Activated naive CD4-positive, alpha-beta T cell treated with anti-CD3 and anti-CD28 coated beads for 36 hours (primary cell): ENCODE measurements at regions of chr17 and their contacts with region 1.

Region 1: GRCh38 chr17:62968445-62968923 is 2.4 kb downstream of the TANC2 start:
- DNase-seq: peak; percentile 66
- H3K4me3 Mint-ChIP-seq: no peak overlapping the region
- H3K27ac Mint-ChIP-seq: no peak overlapping the region
- H3K4me1 Mint-ChIP-seq: peaks cover 22% of the 10 kb centered on the region
- H3K27me3 Mint-ChIP-seq: peaks cover 11% of the 10 kb centered on the region

Region 2: DNA sequence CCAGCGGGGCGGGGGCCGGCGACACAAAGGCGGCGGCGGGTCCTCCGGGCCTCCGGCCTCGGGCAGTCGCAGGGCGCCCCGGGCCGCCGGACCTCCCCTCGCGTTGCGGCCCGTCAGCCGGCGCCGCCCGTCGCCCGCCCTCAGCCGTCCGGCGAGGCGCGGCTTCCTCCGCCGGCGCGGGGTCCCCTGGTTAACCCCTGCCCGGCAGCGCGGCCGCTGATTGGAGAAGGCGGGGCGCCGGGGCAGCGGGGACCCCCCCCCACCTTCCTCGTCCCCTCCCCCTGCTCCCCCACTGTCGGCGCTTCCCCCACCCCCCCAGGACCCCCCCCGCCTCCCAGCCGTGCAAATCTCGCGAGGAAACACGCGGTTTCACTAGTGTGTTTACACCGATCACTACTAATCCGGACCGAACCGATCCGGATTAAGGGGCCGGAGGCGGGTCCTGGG is 490.0 kb before region 1 on chr17 and contains the start of gene TLK2:
- CTCF ChIA-PET with region 1: no interaction called
- intact Hi-C with region 1: loop called (anchors 5 kb)
- DNase-seq: peak; percentile 82
- H3K4me3 Mint-ChIP-seq: peak within 1 kb of the TSS; percentile 89
- H3K27ac Mint-ChIP-seq: peak within 1 kb of the TSS; percentile 95
- H3K4me1 Mint-ChIP-seq: peaks cover 33% of the 10 kb centered on the region
- H3K27me3 Mint-ChIP-seq: no peaks in the 10 kb centered on the region
- total RNA-seq, gene TLK2: 27.1 to 29.5 TPM

Region 3: DNA sequence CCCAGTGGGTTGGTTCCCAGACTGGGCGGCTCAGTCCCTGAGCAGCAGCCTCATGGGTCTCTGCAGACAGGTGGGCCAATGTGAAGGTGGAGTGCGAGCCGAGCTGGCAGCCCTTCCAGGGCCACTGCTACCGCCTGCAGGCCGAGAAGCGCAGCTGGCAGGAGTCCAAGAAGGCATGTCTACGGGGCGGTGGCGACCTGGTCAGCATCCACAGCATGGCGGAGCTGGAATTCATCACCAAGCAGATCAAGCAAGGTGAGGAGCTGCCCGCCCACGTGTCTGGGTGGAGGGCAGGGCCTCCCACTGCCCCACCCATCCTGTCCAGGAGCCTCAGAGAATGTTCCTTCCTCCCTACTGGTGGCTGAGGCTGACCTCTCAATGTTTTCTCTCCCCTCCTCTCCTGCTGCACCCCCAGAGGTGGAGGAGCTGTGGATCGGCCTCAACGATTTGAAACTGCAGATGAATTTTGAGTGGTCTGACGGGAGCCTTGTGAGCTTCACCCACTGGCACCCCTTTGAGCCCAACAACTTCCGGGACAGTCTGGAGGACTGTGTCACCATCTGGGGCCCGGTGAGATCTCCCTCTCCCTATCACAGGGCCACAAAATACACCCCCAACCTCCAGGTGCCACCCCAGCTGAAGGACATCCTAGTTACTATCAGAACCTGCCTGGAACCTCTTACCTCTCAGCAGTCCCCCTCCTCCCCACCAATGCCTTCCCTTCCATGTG is 296.7 kb before region 1 on chr17:
- CTCF ChIA-PET with region 1: no interaction called
- intact Hi-C with region 1: loop called (anchors 1 kb)
- DNase-seq: no peak
- H3K4me3 Mint-ChIP-seq: no peak overlapping the region
- H3K27ac Mint-ChIP-seq: no peak overlapping the region
- H3K4me1 Mint-ChIP-seq: peaks cover 3% of the 10 kb centered on the region
- H3K27me3 Mint-ChIP-seq: no peaks in the 10 kb centered on the region

Region 4: GRCh38 chr17:62724398-62725146 is 243.9 kb before region 1 on chr17:
- CTCF ChIA-PET with region 1: interaction called, 3 read pairs
- intact Hi-C with region 1: loop called (anchors 1 kb)
- DNase-seq: peak; percentile 93
- H3K4me3 Mint-ChIP-seq: no peak overlapping the region
- H3K27ac Mint-ChIP-seq: peak overlapping the region; percentile 25
- H3K4me1 Mint-ChIP-seq: peaks cover 23% of the 10 kb centered on the region
- H3K27me3 Mint-ChIP-seq: peaks cover 48% of the 10 kb centered on the region

Region 5: DNA sequence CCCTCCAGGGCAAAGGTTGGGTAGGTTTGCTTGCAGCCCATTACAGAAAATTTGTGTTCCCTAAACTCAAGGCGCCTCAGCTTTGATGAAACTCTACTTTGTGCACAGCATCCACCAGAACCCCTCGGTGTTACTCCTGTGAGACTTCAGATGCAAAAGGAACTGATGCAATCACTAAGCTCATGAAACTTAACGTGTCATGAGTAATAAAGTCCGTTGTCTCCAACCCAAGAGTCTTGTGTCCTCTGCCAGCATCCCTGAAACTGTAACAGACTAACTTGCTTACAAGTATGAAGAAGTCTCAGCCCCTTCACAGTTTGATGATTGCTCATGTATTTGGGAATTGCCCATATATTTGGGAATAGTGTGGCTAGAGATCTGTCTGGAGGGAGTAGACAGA is 85.6 kb before region 1 on chr17:
- CTCF ChIA-PET with region 1: no interaction called
- intact Hi-C with region 1: no loop called
- DNase-seq: no peak
- H3K4me3 Mint-ChIP-seq: no peak overlapping the region
- H3K27ac Mint-ChIP-seq: no peak overlapping the region
- H3K4me1 Mint-ChIP-seq: peaks cover 7% of the 10 kb centered on the region
- H3K27me3 Mint-ChIP-seq: peaks cover 11% of the 10 kb centered on the region

Region 6: GRCh38 chr17:62892870-62893338 is 75.6 kb before region 1 on chr17:
- CTCF ChIA-PET with region 1: no interaction called
- intact Hi-C with region 1: loop called (anchors 5 kb)
- DNase-seq: peak; percentile 64
- H3K4me3 Mint-ChIP-seq: no peak overlapping the region
- H3K27ac Mint-ChIP-seq: peak overlapping the region; percentile 12
- H3K4me1 Mint-ChIP-seq: peaks cover 9% of the 10 kb centered on the region
- H3K27me3 Mint-ChIP-seq: peaks cover 3% of the 10 kb centered on the region

Region 7: DNA sequence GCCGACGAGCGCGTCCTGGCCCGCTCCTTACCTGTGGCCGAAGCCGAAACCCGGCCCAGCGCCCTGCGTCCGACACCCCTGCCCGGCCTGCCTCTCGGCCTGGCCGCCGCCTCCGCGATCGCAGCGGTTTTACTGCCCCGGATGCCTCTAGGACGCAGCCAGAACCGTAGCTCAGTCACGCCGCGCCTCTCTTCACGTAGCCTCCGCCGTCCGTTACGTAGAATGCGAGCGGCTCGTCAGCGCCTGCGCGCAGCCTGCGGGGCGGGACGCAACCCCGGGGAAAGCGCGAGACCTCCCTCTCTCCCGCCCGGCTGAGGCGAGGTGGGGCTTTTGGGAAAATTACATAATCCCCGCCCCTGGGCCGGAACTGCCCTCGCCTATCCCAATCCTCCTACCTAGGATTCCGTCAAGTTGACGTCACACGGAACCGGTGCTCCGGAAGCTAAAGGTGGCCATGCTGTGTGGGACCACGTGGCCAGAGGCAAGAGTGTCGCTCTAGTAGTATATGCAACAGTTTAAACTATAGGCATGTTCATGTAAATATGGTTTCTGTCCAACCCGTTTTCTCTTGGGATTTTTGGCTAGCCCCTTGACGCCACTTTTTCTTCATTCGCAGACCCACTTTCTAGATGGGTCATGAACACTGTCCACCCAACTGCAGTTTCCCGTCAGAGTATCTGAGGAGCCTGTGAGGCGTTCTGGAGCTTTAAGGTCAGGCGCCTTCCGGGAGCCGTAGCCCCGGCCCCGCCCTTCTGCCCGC is 805.1 kb after region 1 on chr17 and contains the start of gene CCDC47:
- CTCF ChIA-PET with region 1: no interaction called
- intact Hi-C with region 1: loop called (anchors 5 kb)
- DNase-seq: peak; percentile 99
- H3K4me3 Mint-ChIP-seq: peak within 1 kb of the TSS; percentile 98
- H3K27ac Mint-ChIP-seq: peak within 1 kb of the TSS; percentile 100
- H3K4me1 Mint-ChIP-seq: peaks cover 58% of the 10 kb centered on the region
- H3K27me3 Mint-ChIP-seq: no peaks in the 10 kb centered on the region
- total RNA-seq, gene CCDC47: 40.5 to 42.1 TPM